ENCODE measurements at regions of chr1 and their contacts with region 1.

Region 1: GRCh38 chr1:32650752-32651460 is at the start of gene RBBP4:
- DNase-seq: peak; percentile 99
- H3K4me3 ChIP-seq: peak within 1 kb of the TSS; percentile 72 to 91 (median 82)
- H3K27ac ChIP-seq: peak within 1 kb of the TSS; percentile 99
- H3K4me1 ChIP-seq: peaks cover 38 to 72% (median 68%) of the 10 kb centered on the region in 4 donors
- H3K27me3 ChIP-seq: no peaks in the 10 kb centered on the region
- CTCF ChIP-seq: peak in 1 of 3 experiments; percentile 9
- EP300 ChIP-seq: no peak
- POLR2A ChIP-seq: peak; percentile 69
- total RNA-seq, gene RBBP4: 83.0 to 98.8 (median 92.2) TPM

Region 2: GRCh38 chr1:32706491-32706890 is 55.6 kb after region 1 on chr1:
- intact Hi-C with region 1: loop called (anchors 5 kb)
- DNase-seq: no peak
- H3K4me3 ChIP-seq: no peak overlapping the region
- H3K27ac ChIP-seq: peak overlapping the region; percentile 94 to 99 (median 98)
- H3K4me1 ChIP-seq: peaks cover 27 to 55% (median 44%) of the 10 kb centered on the region in 4 donors
- H3K27me3 ChIP-seq: no peaks in the 10 kb centered on the region
- CTCF ChIP-seq: no peak
- EP300 ChIP-seq: no peak
- POLR2A ChIP-seq: no peak

Measured in esophagus muscularis mucosa (tissue), 4 donors.